Mammary epithelial cell (primary cell): ENCODE measurements at regions of chr21 and their contacts with region 1.

Region 1: GRCh38 chr21:17045214-17045853 is 467.5 kb upstream of the CXADR start:
- DNase-seq: peak; percentile 6
- H3K4me3 ChIP-seq: no peak overlapping the region
- H3K27ac ChIP-seq: no peak overlapping the region
- H3K4me1 ChIP-seq: no peaks in the 10 kb centered on the region
- H3K27me3 ChIP-seq: no peaks in the 10 kb centered on the region
- CTCF ChIP-seq: peak; percentile 7 to 36

Region 2: DNA sequence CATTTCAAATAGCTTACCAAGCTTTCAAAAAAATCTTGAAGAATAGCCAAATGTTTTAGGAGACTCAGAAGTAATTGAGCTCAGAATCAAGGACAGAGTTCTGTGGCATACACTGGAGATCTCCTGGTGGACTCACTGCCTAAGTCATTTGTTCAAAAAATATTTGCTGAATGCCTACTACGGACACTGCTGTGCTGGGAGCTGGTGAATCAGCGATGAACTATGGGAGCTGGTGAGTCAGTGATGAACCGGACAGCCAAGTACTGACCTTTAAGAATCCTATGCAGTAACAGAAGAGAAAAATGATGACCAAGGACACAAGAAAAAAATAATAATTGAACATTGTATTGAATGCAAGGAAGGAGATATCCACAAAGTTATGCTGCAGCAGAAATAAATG is 250.4 kb before region 1 on chr21:
- CTCF ChIA-PET with region 1: no interaction called
- dilution Hi-C with region 1: no loop called
- in situ Hi-C with region 1: no loop called
- intact Hi-C with region 1: no loop called
- DNase-seq: peak; percentile 52
- H3K4me3 ChIP-seq: no peak overlapping the region
- H3K27ac ChIP-seq: no peak overlapping the region
- H3K4me1 ChIP-seq: no peaks in the 10 kb centered on the region
- H3K27me3 ChIP-seq: no peaks in the 10 kb centered on the region
- CTCF ChIP-seq: no peak

Region 3: DNA sequence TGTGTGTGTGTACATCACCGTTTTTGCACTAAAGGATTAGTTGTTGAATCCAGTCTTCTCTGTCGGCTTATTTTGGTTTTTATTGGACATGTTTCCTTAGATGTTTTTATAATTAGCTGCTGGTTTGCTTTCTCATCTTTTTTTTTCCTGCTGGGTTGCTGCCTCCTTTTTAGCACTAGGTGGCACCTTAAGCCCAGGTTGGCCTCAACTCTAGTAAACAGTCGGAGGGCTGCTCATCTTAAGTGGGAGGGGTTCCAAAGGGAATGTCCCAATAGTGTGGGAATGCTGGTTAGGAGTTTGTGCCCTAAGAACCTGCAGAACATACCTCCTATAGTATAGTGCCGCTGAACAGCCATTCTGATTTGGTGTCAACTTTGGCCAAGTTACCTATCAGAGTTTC is 102.6 kb before region 1 on chr21:
- CTCF ChIA-PET with region 1: no interaction called
- dilution Hi-C with region 1: no loop called
- in situ Hi-C with region 1: no loop called
- intact Hi-C with region 1: loop called (anchors 5 kb)
- DNase-seq: peak; percentile 8
- H3K4me3 ChIP-seq: no peak overlapping the region
- H3K27ac ChIP-seq: no peak overlapping the region
- H3K4me1 ChIP-seq: no peaks in the 10 kb centered on the region
- H3K27me3 ChIP-seq: no peaks in the 10 kb centered on the region
- CTCF ChIP-seq: no peak

Region 4: DNA sequence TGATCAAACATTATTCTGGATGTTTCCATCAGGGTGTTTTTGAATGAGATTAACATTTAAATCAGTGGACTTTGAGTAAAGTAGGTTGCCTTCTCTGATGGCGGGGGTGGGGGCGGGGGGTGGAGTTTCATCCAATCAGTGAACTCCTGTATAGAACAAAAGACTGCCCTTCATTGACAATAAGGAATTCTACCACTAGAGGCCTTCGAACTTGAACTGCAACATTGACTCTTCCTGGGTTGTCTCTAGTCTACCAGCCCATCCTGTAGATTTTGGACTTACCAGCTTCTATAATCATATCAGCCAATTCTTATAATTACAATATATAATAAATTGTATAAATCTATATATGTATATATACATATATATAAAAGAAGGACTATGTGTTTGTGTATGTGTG is 52.9 kb before region 1 on chr21:
- CTCF ChIA-PET with region 1: no interaction called
- dilution Hi-C with region 1: no loop called
- in situ Hi-C with region 1: no loop called
- intact Hi-C with region 1: no loop called
- DNase-seq: no peak
- H3K4me3 ChIP-seq: no peak overlapping the region
- H3K27ac ChIP-seq: no peak overlapping the region
- H3K4me1 ChIP-seq: no peaks in the 10 kb centered on the region
- H3K27me3 ChIP-seq: no peaks in the 10 kb centered on the region
- CTCF ChIP-seq: no peak